Activated CD8-positive, alpha-beta T cell treated with anti-CD3 and anti-CD28 coated beads for 36 hours (primary cell): ENCODE measurements at regions of chr20 and their contacts with region 1.

Region 1: GRCh38 chr20:330233-331149 is 5.1 kb downstream of the SOX12 start:
- DNase-seq: peak; percentile 76
- ATAC-seq: peak; percentile 56
- H3K4me3 Mint-ChIP-seq: no peak overlapping the region
- H3K27ac Mint-ChIP-seq: no peak overlapping the region
- H3K4me1 Mint-ChIP-seq: peaks cover 17% of the 10 kb centered on the region
- H3K27me3 Mint-ChIP-seq: no peaks in the 10 kb centered on the region
- CTCF ChIP-seq: peak; percentile 90

Region 2: DNA sequence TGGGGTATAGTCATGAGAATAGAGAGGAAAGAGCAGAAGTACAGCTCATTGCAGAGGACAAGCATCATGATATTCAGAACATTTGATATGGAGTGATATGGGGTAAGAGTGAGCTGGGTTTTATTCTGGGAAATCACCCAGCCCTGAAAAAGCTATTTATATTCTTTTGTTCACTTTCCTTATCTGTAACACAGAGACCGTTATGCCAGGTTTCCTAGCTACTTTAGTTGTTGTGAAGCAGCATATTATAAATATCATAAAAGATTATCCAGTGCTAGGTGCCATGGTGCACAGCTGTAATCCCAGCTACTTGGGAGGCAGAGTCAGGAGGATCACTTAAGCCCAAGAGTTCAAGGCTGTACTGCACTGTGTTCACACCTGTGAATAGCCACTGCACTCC is 113.2 kb before region 1 on chr20:
- CTCF ChIA-PET with region 1: interaction called, 12 read pairs
- POLR2A ChIA-PET with region 1: no interaction called
- intact Hi-C with region 1: no loop called
- DNase-seq: no peak
- ATAC-seq: no peak
- H3K4me3 Mint-ChIP-seq: no peak overlapping the region
- H3K27ac Mint-ChIP-seq: no peak overlapping the region
- H3K4me1 Mint-ChIP-seq: no peaks in the 10 kb centered on the region
- H3K27me3 Mint-ChIP-seq: peaks cover 10% of the 10 kb centered on the region
- CTCF ChIP-seq: no peak

Region 3: DNA sequence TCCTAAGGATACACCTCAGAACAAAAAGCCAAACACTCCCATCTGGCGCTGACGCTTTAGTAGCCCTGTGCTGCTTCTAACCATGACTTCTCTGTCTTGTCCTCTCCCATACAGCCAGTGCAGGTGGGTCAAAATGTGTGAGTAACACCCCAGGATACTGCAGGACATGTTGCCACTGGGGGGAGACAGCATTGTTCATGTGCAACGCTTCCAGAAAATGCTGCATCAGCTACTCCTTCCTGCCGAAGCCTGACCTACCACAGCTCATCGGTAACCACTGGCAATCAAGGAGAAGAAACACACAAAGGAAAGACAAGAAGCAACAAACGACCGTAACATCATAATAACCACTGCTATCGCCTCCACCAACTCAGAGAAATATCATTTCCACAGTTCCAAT is 71.5 kb before region 1 on chr20:
- CTCF ChIA-PET with region 1: interaction called, 45 read pairs
- POLR2A ChIA-PET with region 1: no interaction called
- intact Hi-C with region 1: no loop called
- DNase-seq: peak; percentile 29
- ATAC-seq: peak; percentile 55
- H3K4me3 Mint-ChIP-seq: no peak overlapping the region
- H3K27ac Mint-ChIP-seq: no peak overlapping the region
- H3K4me1 Mint-ChIP-seq: peaks cover 10% of the 10 kb centered on the region
- H3K27me3 Mint-ChIP-seq: peaks cover 2% of the 10 kb centered on the region
- CTCF ChIP-seq: no peak

Region 4: DNA sequence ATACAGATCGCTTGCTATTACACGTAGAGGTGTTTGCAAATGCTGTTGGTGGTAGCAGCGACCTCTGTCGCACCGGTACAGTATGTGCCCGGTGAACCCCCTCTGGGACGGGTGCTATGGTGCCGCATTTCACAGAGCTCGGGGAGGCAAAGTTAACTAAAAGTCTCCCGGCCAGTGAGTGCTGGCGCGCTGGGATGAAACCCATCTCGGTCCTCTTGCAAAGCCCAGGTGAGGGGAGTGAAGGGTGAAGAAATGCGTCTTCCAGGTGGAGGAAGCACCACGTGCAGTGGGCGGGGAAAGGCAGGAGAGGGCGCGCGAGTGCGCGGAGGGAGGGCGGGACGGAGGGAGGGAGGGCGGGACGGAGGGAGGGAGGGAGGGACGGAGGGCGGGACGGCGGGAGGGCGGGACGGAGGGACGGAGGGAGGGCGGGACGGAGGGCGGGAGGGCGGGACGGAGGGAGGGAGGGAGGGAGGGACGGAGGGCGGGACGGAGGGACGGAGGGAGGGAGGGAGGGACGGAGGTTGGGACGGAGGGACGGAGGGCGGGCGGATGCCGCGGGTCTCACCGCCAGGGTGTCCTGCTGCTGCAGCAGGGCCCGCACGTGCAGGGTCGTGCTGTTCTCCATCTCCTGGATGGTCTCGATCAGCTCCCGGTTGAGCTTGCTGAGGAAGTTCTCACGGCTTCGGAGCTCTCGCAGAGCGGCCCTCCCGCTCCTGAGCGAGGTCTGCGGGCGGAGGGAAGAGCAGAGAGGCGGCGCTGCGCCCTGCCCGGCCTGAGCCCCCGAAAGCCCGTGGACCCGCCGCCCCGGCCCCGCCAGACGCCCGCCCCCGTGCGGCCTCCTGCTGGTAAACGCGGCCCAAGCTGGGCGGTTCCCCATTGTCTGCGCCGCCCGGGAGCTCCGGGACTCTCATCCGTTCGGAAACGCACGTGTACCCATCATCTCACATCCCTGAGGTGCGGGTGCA is 51.6 kb before region 1 on chr20:
- CTCF ChIA-PET with region 1: interaction called, 10 read pairs
- POLR2A ChIA-PET with region 1: interaction called, 6 read pairs
- intact Hi-C with region 1: no loop called
- DNase-seq: no peak
- ATAC-seq: peak; percentile 20
- H3K4me3 Mint-ChIP-seq: peak overlapping the region; percentile 12
- H3K27ac Mint-ChIP-seq: no peak overlapping the region
- H3K4me1 Mint-ChIP-seq: no peaks in the 10 kb centered on the region
- H3K27me3 Mint-ChIP-seq: no peaks in the 10 kb centered on the region
- CTCF ChIP-seq: no peak

Region 5: DNA sequence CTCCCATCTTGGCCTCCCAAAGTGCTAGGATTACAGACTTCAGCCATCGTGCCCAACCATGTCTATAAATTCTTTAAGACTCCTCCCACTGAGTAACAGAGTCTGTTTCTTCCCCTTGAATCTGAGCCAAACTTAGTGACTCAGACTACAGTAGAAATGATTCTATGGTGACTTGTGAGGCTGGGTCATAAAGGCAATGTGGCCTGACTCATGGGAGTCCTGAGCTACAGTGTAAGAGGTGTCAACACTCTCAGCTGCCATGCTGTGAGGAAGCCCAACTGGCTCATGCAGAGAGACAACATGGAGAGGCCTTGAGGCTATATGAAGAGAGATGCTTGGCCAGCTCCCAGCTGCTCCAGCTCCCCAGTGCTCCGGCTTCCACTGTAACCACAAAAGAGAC is 11.2 kb after region 1 on chr20:
- CTCF ChIA-PET with region 1: interaction called, 24 read pairs
- POLR2A ChIA-PET with region 1: interaction called, 3 read pairs
- intact Hi-C with region 1: no loop called
- DNase-seq: peak; percentile 76
- ATAC-seq: peak; percentile 95
- H3K4me3 Mint-ChIP-seq: no peak overlapping the region
- H3K27ac Mint-ChIP-seq: no peak overlapping the region
- H3K4me1 Mint-ChIP-seq: peaks cover 10% of the 10 kb centered on the region
- H3K27me3 Mint-ChIP-seq: no peaks in the 10 kb centered on the region
- CTCF ChIP-seq: no peak